K562 (cell line): ENCODE measurements at regions of chr6 and their contacts with region 1.

Region 1: DNA sequence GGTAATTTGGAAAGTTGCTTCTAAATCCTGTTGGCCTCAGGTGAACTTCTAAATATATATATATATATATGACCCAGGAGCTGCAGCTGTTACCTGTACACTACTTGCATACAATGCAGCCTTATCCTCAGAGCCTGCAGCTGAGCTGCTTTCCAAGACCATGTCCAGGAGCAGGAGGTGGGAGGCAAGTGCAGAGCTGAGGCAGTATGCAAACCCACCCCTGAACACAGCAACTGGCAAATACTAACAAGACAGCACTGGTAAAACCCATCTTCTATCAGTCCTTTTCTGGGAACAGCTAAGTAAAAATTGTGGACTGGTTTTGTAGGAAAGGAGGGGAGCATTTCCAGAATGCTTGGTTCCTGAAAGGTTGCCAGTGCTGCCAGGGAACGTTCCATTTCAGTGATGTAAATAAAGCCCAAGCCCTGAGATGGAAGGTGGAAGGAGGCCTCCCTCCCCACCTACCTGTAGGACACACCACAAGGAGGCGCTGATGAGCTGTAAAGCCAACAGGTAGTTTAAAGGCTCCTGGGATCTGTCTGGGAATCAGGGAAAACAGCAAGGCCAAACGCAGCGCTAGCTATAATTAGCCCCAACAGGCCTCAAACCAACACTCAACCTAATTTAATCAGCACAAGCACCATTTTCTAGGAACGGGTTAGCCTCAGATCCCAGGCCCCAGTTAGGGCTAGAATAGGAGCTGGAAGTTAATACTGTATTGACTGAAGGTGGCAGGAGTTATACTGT is 93.8 kb upstream of the MAP7 start:
- DNase-seq: peak; percentile 73 to 89 (median 76)
- ATAC-seq: peak; percentile 95
- H3K4me3 ChIP-seq: no peak overlapping the region
- H3K27ac ChIP-seq: no peak overlapping the region
- H3K4me1 ChIP-seq: peaks cover 0 to 8% of the 10 kb centered on the region in 2 experiments; a peak in 2 of 5 replicates
- H3K27me3 ChIP-seq: no peaks in the 10 kb centered on the region
- CTCF ChIP-seq: peak; percentile 90 to 95 (median 93)
- EP300 ChIP-seq: no peak
- POLR2A ChIP-seq: no peak
- RAD21 ChIP-seq: peak; percentile 99

Region 2: GRCh38 chr6:136274062-136274461 is 370.0 kb before region 1 on chr6:
- CTCF ChIA-PET with region 1: no interaction called
- POLR2A ChIA-PET with region 1: no interaction called
- in situ Hi-C with region 1: no loop called
- intact Hi-C with region 1: no loop called
- DNase-seq: no peak
- ATAC-seq: no peak
- H3K4me3 ChIP-seq: no peak overlapping the region
- H3K27ac ChIP-seq: no peak overlapping the region
- H3K4me1 ChIP-seq: no peaks in the 10 kb centered on the region
- H3K27me3 ChIP-seq: no peaks in the 10 kb centered on the region
- CTCF ChIP-seq: no peak
- EP300 ChIP-seq: no peak
- POLR2A ChIP-seq: 0 out of 2 replicates have a peak, but pooled peaks have one; percentile 25
- RAD21 ChIP-seq: no peak

Region 3: GRCh38 chr6:136344420-136344819 is 299.6 kb before region 1 on chr6:
- CTCF ChIA-PET with region 1: no interaction called
- POLR2A ChIA-PET with region 1: no interaction called
- in situ Hi-C with region 1: no loop called
- intact Hi-C with region 1: no loop called
- DNase-seq: no peak
- ATAC-seq: no peak
- H3K4me3 ChIP-seq: no peak overlapping the region
- H3K27ac ChIP-seq: no peak overlapping the region
- H3K4me1 ChIP-seq: no peaks in the 10 kb centered on the region
- H3K27me3 ChIP-seq: no peaks in the 10 kb centered on the region; a peak in 3 of 5 replicates
- CTCF ChIP-seq: no peak
- EP300 ChIP-seq: no peak
- POLR2A ChIP-seq: no peak
- RAD21 ChIP-seq: no peak

Region 4: DNA sequence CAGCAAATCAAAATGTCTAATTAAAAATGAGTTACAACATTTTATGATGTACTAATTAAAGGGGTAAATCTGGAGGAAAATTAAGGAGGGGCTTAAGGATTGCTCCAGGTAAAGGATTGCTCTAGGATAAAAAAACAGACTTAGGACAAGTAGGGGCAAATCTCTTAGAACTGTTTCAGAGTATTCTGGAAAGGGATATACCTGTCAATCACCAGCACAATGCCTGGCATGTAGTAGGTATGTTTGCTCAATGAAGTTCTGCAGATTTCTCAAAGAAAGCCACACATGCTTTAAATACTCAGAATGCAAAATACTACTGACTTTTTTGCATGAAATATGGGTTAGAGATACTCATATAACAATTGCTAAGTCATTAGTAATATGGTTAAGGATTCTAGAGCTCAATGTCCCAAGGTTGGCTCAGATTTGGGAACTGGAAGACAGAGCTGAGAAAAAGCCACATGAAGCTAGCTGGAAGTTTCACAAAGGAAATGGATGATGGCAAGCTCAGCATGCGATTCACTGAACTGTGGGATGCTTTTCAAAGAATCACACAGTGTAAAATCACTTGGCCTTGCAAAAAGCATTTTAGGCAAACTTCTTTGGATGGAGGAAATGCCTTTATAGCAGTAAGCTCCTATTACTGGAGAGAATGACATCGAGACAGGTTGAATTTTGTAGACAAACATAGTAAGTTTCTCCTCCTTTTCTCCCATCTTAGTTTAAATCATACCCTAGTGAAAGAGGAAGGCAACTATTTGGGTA is 75.4 kb after region 1 on chr6:
- CTCF ChIA-PET with region 1: no interaction called
- POLR2A ChIA-PET with region 1: no interaction called
- in situ Hi-C with region 1: no loop called
- intact Hi-C with region 1: loop called (anchors 5 kb)
- DNase-seq: no peak
- ATAC-seq: no peak
- H3K4me3 ChIP-seq: no peak overlapping the region
- H3K27ac ChIP-seq: no peak overlapping the region
- H3K4me1 ChIP-seq: peaks cover 2 to 7% of the 10 kb centered on the region in 2 experiments; a peak in 3 of 5 replicates
- H3K27me3 ChIP-seq: no peaks in the 10 kb centered on the region
- CTCF ChIP-seq: no peak
- EP300 ChIP-seq: no peak
- POLR2A ChIP-seq: no peak
- RAD21 ChIP-seq: no peak

Region 5: GRCh38 chr6:136737871-136738691 is 94.1 kb after region 1 on chr6:
- CTCF ChIA-PET with region 1: no interaction called
- POLR2A ChIA-PET with region 1: no interaction called
- in situ Hi-C with region 1: no loop called
- intact Hi-C with region 1: loop called (anchors 5 kb)
- DNase-seq: peak in 2 of 4 experiments; percentile 54 to 72
- ATAC-seq: peak; percentile 56
- H3K4me3 ChIP-seq: 0 out of 2 replicates have a peak overlapping the region, but pooled peaks have one; percentile 2
- H3K27ac ChIP-seq: peak overlapping the region; percentile 73
- H3K4me1 ChIP-seq: peaks cover 7 to 65% of the 10 kb centered on the region in 2 experiments
- H3K27me3 ChIP-seq: no peaks in the 10 kb centered on the region
- CTCF ChIP-seq: no peak
- EP300 ChIP-seq: peak; percentile 88
- POLR2A ChIP-seq: no peak
- RAD21 ChIP-seq: no peak

Region 6: GRCh38 chr6:136873748-136874147 is 229.7 kb after region 1 on chr6:
- CTCF ChIA-PET with region 1: no interaction called
- POLR2A ChIA-PET with region 1: no interaction called
- in situ Hi-C with region 1: no loop called
- intact Hi-C with region 1: no loop called
- DNase-seq: peak in 1 of 4 experiments; percentile 48
- ATAC-seq: no peak
- H3K4me3 ChIP-seq: no peak overlapping the region
- H3K27ac ChIP-seq: no peak overlapping the region
- H3K4me1 ChIP-seq: no peaks in the 10 kb centered on the region
- H3K27me3 ChIP-seq: no peaks in the 10 kb centered on the region
- CTCF ChIP-seq: no peak
- EP300 ChIP-seq: no peak
- POLR2A ChIP-seq: no peak
- RAD21 ChIP-seq: no peak